ENCODE measurements at regions of chr1 and their contacts with region 1.

Region 1: GRCh38 chr1:157992031-157992832 is 1.2 kb upstream of the KIRREL1 start:
- DNase-seq: peak; percentile 84 to 89
- H3K4me3 ChIP-seq: peak overlapping the region in 1 of 2 donors; percentile 91
- H3K27ac ChIP-seq: peak overlapping the region; percentile 97 to 99
- H3K4me1 ChIP-seq: peaks cover 0 to 34% (median 30%) of the 10 kb centered on the region in 4 donors
- H3K27me3 ChIP-seq: no peaks in the 10 kb centered on the region
- CTCF ChIP-seq: peak; percentile 95 to 97

Region 2: DNA sequence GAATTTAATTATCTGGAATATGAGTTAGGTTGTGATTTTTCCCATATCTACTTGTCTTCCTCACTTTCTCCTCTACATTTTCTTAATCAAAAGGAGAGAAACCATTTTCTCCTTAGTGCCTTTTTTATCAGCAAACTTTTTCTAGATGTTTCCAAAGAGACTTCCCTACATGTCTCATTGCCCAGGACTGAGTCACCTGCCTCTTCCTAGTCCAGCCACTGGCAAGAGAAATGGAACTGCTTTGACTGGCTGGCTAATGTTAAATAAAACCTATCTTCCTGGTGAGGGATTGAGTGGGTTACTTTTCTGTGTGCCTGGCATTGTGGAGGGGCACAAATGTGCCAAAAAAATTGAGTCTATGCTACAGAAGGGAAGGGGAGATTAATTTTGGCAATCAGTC is 98.6 kb before region 1 on chr1:
- intact Hi-C with region 1: no loop called
- DNase-seq: no peak
- H3K4me3 ChIP-seq: no peak overlapping the region
- H3K27ac ChIP-seq: no peak overlapping the region
- H3K4me1 ChIP-seq: peaks cover 0 to 9% (median 0%) of the 10 kb centered on the region in 4 donors
- H3K27me3 ChIP-seq: no peaks in the 10 kb centered on the region
- CTCF ChIP-seq: no peak

Region 3: GRCh38 chr1:157932069-157932468 is 60.2 kb before region 1 on chr1:
- intact Hi-C with region 1: no loop called
- DNase-seq: no peak
- H3K4me3 ChIP-seq: no peak overlapping the region
- H3K27ac ChIP-seq: no peak overlapping the region
- H3K4me1 ChIP-seq: no peaks in the 10 kb centered on the region
- H3K27me3 ChIP-seq: peaks cover 0 to 2% of the 10 kb centered on the region in 2 donors
- CTCF ChIP-seq: no peak

Region 4: GRCh38 chr1:158002631-158003405 is 10.6 kb after region 1 on chr1:
- intact Hi-C with region 1: no loop called
- DNase-seq: peak in 1 of 2 donors; percentile 44
- H3K4me3 ChIP-seq: peak overlapping the region in 1 of 2 donors; percentile 10
- H3K27ac ChIP-seq: peak overlapping the region; percentile 90 to 94
- H3K4me1 ChIP-seq: peaks cover 17 to 100% (median 97%) of the 10 kb centered on the region in 4 donors
- H3K27me3 ChIP-seq: no peaks in the 10 kb centered on the region
- CTCF ChIP-seq: no peak

Region 5: DNA sequence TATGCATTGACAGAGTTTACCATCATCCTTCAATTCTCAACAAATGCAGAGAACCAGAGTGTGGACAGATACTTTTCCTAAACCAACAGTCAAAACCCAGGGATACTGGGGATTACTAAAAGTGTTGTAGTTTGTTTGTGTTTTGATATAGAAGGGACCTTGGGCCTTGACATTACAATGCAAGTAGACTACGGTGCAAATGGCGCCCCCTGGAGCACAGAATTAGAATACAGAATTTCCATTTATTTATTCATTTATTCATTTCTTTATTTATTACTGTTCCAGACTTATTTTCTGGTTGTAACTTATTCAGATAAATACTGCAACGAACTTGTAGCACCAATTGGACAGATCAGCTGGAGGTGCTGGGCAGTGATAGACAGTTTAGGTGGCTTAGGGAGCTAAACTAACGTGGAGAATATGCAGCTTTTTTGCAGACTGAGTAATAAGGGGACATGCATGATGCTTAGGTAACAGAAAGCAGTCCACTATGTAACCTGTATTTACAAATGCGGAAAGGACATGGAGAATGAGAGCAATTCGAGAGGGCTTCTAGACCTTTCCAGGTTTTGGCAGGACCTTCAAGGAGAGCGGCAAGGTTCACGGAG is 43.8 kb after region 1 on chr1:
- intact Hi-C with region 1: loop called (anchors 2 kb)
- DNase-seq: no peak
- H3K4me3 ChIP-seq: no peak overlapping the region
- H3K27ac ChIP-seq: peak overlapping the region in 1 of 2 donors; percentile 32
- H3K4me1 ChIP-seq: peaks cover 0 to 61% (median 43%) of the 10 kb centered on the region in 4 donors
- H3K27me3 ChIP-seq: no peaks in the 10 kb centered on the region
- CTCF ChIP-seq: peak; percentile 69 to 73

Region 6: DNA sequence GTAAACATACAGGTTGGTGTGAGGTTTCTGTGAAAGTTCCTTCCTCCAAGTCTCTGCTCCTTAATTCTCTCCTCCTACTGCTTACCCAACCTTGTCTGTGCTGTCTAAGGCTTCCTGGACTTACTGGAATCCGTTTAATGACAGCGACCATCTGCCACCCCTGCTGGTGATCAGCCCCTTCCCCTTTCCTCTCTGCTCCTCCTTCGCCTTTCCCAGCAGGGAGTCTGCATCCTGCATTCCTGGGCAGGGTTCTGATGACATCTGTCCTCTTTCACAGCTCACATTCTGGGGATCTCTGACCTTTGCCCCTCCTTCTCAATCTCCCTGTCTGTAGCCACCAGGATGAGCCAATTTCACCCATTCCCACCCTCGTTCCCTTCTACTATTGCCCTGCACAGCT is 67.8 kb after region 1 on chr1:
- intact Hi-C with region 1: no loop called
- DNase-seq: no peak
- H3K4me3 ChIP-seq: no peak overlapping the region
- H3K27ac ChIP-seq: no peak overlapping the region
- H3K4me1 ChIP-seq: peaks cover 5 to 82% (median 41%) of the 10 kb centered on the region in 4 donors
- H3K27me3 ChIP-seq: no peaks in the 10 kb centered on the region
- CTCF ChIP-seq: no peak

Region 7: GRCh38 chr1:158087320-158087927 is 95.2 kb after region 1 on chr1:
- intact Hi-C with region 1: loop called (anchors 2 kb)
- DNase-seq: peak in 1 of 2 donors; percentile 51
- H3K4me3 ChIP-seq: no peak overlapping the region
- H3K27ac ChIP-seq: no peak overlapping the region
- H3K4me1 ChIP-seq: no peaks in the 10 kb centered on the region
- H3K27me3 ChIP-seq: no peaks in the 10 kb centered on the region
- CTCF ChIP-seq: peak; percentile 76 to 85